Ascending aorta (tissue), 2 donors: ENCODE measurements at regions of chr15 and their contacts with region 1.

Region 1: DNA sequence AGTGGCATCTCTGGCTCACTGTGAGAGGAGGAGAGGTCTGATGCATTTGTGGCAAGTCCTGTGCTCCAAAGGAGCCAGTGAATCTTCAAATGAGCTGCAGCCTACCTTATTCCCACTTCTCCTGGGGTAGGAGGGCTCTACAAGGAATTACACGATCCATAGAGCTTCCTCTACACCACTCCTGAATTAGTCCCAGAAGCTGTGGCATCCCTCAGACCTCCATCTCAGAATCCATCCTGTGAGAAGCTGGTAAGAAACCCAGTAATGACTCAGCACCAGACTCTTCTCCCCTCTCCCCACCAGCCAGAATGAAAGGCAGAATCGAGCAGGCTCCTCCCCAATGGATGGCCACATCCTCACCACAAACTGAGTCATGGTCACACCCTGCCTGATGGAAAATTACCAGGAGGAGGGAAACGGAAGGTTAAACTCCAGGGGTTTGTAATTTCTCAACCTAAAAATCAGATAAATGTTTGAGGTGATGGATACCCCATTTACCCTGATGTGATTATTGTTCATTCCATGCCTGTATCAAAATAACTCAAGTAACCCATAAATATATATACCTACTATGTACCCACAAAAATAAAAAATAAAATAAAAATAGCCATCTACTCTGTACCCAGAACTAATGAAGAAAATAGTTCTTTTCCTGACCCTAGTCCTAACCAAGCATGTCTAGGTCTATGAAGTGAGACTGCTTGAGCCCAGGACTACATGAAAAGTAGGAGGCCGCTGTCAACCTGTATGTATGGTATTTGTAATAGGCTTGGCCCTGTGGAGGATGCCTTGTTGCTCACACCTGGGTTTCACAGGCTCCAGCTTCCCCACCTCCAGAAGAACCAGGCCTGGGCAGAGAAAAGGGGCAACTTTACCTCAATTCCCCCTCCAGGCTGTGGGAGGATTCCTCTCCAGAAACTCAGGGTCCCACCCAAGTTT is 6.6 kb upstream of the PKM start:
- DNase-seq: peak; percentile 63 to 87
- H3K4me3 ChIP-seq: peak overlapping the region in 1 of 2 donors; percentile 29
- H3K27ac ChIP-seq: peak overlapping the region; percentile 59 to 74
- H3K4me1 ChIP-seq: peaks cover 6 to 13% of the 10 kb centered on the region in 2 donors
- H3K27me3 ChIP-seq: no peaks in the 10 kb centered on the region
- CTCF ChIP-seq: no peak

Region 2: DNA sequence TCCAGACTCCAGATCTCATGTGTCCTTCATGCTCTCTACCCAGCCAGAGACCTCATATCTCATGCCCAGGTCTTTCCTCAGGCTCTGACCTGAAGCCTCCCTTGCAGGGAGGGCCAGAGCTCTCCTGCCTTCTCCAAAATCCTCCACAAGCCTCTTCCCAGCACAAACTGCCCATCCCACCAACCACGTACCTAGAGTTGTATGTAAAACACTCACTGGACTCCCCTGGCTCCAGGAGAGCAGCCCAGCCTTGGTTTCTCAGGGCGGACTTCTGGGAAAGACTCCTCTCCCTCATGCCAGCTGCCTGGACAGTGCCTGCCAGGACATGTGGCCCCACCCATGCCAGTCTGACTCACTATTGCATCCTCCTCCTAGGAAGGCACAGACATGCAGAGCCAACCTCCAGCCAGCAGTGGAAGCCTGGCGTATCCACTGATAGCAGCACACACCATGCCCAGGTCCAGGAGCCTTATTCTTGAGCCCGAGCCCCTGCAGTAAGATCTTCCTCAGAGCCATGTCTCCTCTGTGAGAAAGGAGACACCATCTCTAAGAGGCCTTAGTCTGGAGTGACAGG is 15.2 kb before region 1 on chr15:
- intact Hi-C with region 1: loop called (anchors 2 kb)
- DNase-seq: peak in 1 of 2 donors; percentile 79
- H3K4me3 ChIP-seq: no peak overlapping the region
- H3K27ac ChIP-seq: peak overlapping the region; percentile 25 to 44
- H3K4me1 ChIP-seq: peaks cover 7 to 26% of the 10 kb centered on the region in 2 donors
- H3K27me3 ChIP-seq: no peaks in the 10 kb centered on the region
- CTCF ChIP-seq: no peak

Region 3: DNA sequence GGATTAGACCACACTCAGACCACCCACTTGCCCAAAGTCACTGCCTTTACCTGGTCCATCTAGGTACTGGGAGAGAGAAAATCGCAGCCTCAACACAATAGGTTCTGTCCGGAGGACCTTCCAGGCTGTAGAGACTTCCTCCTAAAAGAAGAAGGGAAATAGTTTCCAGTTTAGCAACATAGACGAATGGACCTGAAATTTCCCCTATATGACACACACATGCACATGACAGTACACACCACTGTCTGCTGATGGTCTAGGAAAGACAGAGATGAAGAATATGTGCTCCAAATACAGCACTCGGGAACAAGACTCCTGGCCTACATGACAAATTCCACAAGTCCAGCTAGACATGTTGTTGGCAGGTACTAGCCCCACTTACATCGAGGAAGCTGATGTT is 27.5 kb after region 1 on chr15:
- intact Hi-C with region 1: no loop called
- DNase-seq: no peak
- H3K4me3 ChIP-seq: no peak overlapping the region
- H3K27ac ChIP-seq: no peak overlapping the region
- H3K4me1 ChIP-seq: no peaks in the 10 kb centered on the region
- H3K27me3 ChIP-seq: no peaks in the 10 kb centered on the region
- CTCF ChIP-seq: no peak